ENCODE measurements at regions of chr3 and their contacts with region 1.

Region 1: DNA sequence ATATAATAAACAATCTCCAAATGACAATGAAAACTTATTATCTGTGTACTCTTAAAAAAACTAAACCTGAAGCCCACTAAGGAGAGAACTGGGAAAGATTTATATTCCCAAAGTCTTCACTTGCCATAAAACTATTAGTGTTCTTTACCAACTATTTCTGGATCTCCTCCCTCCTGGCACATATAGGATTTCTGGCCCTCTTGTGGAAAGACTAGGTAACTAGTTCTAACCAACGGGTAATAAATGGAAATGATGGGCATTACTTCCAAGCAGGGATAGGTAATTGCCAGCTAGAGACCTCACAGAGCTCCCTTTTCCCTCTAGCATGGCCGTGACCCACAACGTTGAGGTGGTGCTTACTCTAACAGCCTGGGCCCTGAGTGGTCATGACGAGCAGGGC is 110.1 kb downstream of the DNAH12 start:
- DNase-seq: peak; percentile 69
- H3K4me3 Mint-ChIP-seq: no peak overlapping the region
- H3K27ac Mint-ChIP-seq: no peak overlapping the region
- H3K4me1 Mint-ChIP-seq: no peaks in the 10 kb centered on the region
- H3K27me3 Mint-ChIP-seq: peaks cover 26% of the 10 kb centered on the region
- CTCF ChIP-seq: peak; percentile 48

Region 2: GRCh38 chr3:57179580-57180410 is 254.2 kb before region 1 on chr3:
- CTCF ChIA-PET with region 1: no interaction called
- POLR2A ChIA-PET with region 1: no interaction called
- intact Hi-C with region 1: loop called (anchors 1 kb)
- DNase-seq: peak; percentile 31
- H3K4me3 Mint-ChIP-seq: no peak overlapping the region
- H3K27ac Mint-ChIP-seq: no peak overlapping the region
- H3K4me1 Mint-ChIP-seq: no peaks in the 10 kb centered on the region
- H3K27me3 Mint-ChIP-seq: peaks cover 21% of the 10 kb centered on the region
- CTCF ChIP-seq: peak; percentile 47

Region 3: GRCh38 chr3:57421336-57421735 is 12.7 kb before region 1 on chr3:
- CTCF ChIA-PET with region 1: interaction called, 15 read pairs
- POLR2A ChIA-PET with region 1: no interaction called
- intact Hi-C with region 1: no loop called
- DNase-seq: no peak
- H3K4me3 Mint-ChIP-seq: no peak overlapping the region
- H3K27ac Mint-ChIP-seq: no peak overlapping the region
- H3K4me1 Mint-ChIP-seq: no peaks in the 10 kb centered on the region
- H3K27me3 Mint-ChIP-seq: peaks cover 11% of the 10 kb centered on the region
- CTCF ChIP-seq: no peak

Region 4: DNA sequence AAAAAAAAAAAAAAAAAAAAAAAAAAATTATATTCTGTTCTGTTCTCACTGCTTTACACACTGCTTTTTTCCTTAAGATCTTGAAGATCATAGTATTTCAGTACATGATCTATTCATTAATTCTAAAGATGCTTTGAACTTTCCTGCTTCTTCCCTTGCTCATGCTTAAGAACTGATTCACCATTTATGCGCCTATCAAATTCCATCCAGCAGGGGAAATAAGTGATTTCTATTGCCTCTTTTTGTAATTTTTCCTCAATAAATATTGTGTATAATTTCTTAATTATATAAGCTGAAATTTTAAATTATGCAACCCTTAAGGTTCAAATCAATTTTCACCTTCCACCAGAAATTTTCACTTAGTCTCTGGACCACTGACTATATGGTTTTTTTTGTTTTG is 248.2 kb after region 1 on chr3:
- CTCF ChIA-PET with region 1: no interaction called
- POLR2A ChIA-PET with region 1: no interaction called
- intact Hi-C with region 1: no loop called
- DNase-seq: peak; percentile 9
- H3K4me3 Mint-ChIP-seq: no peak overlapping the region
- H3K27ac Mint-ChIP-seq: no peak overlapping the region
- H3K4me1 Mint-ChIP-seq: peaks cover 18% of the 10 kb centered on the region
- H3K27me3 Mint-ChIP-seq: no peaks in the 10 kb centered on the region
- CTCF ChIP-seq: no peak